ENCODE measurements at regions of chr6 and their contacts with region 1.

Region 1: DNA sequence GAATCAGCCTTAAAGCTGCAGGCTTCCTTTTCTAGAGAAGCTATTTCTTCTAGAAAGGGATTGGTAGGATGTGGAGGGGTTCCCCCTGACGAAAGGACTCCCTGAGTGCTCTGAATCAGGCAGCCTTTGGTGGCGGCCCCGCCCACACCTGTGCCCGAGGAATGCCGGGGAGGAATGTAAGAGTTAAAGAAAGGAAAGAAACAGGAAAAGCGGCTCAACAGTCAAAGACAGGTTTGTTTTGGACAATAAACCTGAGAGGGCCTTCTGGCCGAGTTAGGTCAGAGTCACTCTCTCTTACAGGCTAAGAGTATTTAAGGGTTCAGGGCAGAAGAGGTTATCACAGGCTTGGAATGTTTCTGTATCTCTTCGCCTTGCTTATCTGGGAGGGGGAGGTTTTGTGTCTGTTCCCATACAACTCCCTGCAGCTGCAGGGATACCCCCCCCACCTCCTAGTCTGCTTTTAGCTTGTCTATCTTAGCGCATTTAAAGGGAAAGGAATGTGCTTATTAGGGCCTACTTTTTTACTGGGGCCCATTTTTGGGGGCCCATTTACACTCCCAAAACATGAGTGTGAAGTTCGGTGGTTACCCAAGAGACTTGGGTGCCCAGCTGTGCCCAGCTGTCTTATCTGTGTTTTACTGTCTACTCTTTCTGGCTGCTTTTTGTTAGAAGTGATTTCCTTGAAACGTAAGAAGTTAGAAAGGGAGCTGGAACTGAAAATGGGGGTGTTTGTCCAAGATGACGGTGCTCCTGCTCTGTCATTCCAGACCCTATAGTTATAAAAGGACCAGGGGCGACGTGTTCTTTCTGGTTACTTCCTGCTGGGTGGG is 32.8 kb downstream of the DYNLT1 start:
- DNase-seq: peak; percentile 69 to 87
- H3K4me3 ChIP-seq: peak overlapping the region; percentile 18 to 39 (median 28); a peak in 7 of 8 replicates
- H3K27ac ChIP-seq: peak overlapping the region; percentile 86
- H3K4me1 ChIP-seq: peaks cover 7 to 15% (median 10%) of the 10 kb centered on the region in 4 experiments; a peak in 5 of 7 replicates
- H3K27me3 ChIP-seq: no peaks in the 10 kb centered on the region
- CTCF ChIP-seq: no peak
- EP300 ChIP-seq: peak in 1 of 2 experiments; percentile 42; a peak in 1 of 3 replicates
- POLR2A ChIP-seq: peak in 1 of 2 experiments; percentile 37; a peak in 1 of 3 replicates
- RAD21 ChIP-seq: no peak

Region 2: DNA sequence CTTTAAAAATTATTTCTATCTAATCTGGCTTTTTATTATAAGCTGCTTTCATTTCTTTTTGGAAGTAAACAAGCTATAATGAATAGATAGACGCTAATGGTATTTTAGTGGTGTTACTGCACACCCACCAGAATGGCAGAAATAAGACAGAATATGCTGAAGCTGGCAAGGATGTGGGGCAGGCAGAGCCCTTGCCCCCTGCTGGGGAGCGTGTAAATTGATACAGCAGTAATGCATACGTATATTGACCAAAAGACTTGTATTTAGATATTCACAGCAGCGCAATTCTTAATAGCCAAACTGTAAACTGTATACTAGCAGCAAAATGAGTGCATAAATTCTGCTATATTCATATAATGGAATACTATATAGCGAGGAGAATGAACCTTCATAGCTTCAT is 16.5 kb before region 1 on chr6:
- CTCF ChIA-PET with region 1: interaction called, 13 read pairs
- POLR2A ChIA-PET with region 1: interaction called, 5 read pairs
- DNase-seq: no peak
- H3K4me3 ChIP-seq: no peak overlapping the region
- H3K27ac ChIP-seq: no peak overlapping the region
- H3K4me1 ChIP-seq: no peaks in the 10 kb centered on the region
- H3K27me3 ChIP-seq: no peaks in the 10 kb centered on the region; a peak in 1 of 7 replicates
- CTCF ChIP-seq: no peak
- EP300 ChIP-seq: no peak
- POLR2A ChIP-seq: no peak
- RAD21 ChIP-seq: no peak

Region 3: GRCh38 chr6:158631678-158632537 is 20.2 kb after region 1 on chr6:
- CTCF ChIA-PET with region 1: interaction called, 5 read pairs
- POLR2A ChIA-PET with region 1: interaction called, 13 read pairs
- DNase-seq: no peak
- H3K4me3 ChIP-seq: no peak overlapping the region
- H3K27ac ChIP-seq: no peak overlapping the region
- H3K4me1 ChIP-seq: peaks cover 0 to 7% (median 0%) of the 10 kb centered on the region in 4 experiments; a peak in 3 of 7 replicates
- H3K27me3 ChIP-seq: no peaks in the 10 kb centered on the region
- CTCF ChIP-seq: no peak
- EP300 ChIP-seq: no peak
- POLR2A ChIP-seq: no peak
- RAD21 ChIP-seq: no peak

Region 4: GRCh38 chr6:158644231-158645063 is 32.7 kb after region 1 on chr6 and contains the start of gene DYNLT1:
- CTCF ChIA-PET with region 1: no interaction called
- POLR2A ChIA-PET with region 1: interaction called, 13 read pairs
- DNase-seq: peak; percentile 80 to 99
- H3K4me3 ChIP-seq: peak within 1 kb of the TSS; percentile 91 to 97 (median 95)
- H3K27ac ChIP-seq: peak within 1 kb of the TSS; percentile 91
- H3K4me1 ChIP-seq: peaks cover 0 to 7% (median 3%) of the 10 kb centered on the region in 4 experiments; a peak in 2 of 7 replicates
- H3K27me3 ChIP-seq: peaks cover 0 to 4% (median 0%) of the 10 kb centered on the region in 4 experiments; a peak in 2 of 7 replicates
- CTCF ChIP-seq: 0 out of 4 replicates have a peak, but pooled peaks of 1 of the 3 experiments have one; percentile 3
- EP300 ChIP-seq: no peak
- POLR2A ChIP-seq: peak; percentile 94 to 95
- RAD21 ChIP-seq: no peak; a peak in 1 of 4 replicates
- total RNA-seq, gene DYNLT1: 109 and 119 TPM in 2 replicates

Measured in H1 (cell line).